ENCODE measurements at regions of chr2 and their contacts with region 1.

Region 1: GRCh38 chr2:9205963-9206948 is at the start of gene ASAP2:
- DNase-seq: peak; percentile 38 to 96 (median 66)

Region 2: DNA sequence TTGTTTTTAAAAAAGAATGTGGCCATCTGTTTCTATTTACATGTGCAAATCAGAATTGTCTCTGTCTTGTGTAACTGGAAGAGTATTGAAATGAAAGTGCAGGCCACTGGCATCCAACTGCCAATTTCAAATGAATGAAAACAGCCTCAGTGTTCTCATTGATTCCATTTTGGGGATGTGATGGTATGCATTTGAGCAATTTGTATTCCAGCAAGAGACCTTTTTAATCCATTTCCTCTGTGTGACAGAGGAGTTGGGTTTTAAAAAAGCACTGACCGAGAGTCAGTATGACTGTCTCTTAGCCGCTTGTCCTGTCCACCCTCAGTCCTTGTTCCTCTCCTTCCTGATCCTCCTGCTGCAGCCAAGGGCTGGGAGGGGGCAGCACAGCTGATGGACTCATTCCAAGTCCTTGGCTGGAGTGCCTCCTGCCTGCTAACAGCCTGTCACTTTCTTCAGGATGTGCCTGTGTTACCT is 50.4 kb after region 1 on chr2:
- intact Hi-C with region 1: loop called (anchors 5 kb)
- DNase-seq: peak in 1 of 10 donors; percentile 29

Region 3: GRCh38 chr2:9423100-9423921 is 217.1 kb after region 1 on chr2 and contains the starts of genes CPSF3 and ITGB1BP1:
- intact Hi-C with region 1: loop called (anchors 10 kb)
- DNase-seq: peak; percentile 95 to 100 (median 96)